ENCODE measurements at regions of chr19 and their contacts with region 1.

Region 1: DNA sequence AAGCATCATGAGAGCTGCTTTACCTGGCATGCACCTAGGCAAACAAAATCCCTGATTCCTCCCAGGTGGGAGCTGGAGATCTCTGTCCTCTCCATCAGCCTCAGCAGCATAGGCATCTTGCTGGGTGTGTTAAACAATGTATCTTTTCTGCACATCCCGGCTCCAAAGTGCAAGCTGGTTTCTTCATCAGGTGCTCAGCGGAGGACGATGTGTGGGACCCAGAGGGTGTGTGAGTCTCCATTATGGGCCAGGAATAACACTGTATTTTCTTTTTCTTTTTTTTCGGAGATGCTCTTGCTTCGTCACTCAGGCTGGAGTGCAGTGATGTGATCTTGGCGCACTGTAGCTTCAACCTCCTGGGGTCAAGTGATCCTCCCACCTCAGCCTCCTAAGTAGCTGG is 9.9 kb downstream of the CNFN start:
- DNase-seq: no peak
- ATAC-seq: no peak
- H3K4me3 Mint-ChIP-seq: no peak overlapping the region
- H3K27ac Mint-ChIP-seq: no peak overlapping the region
- H3K4me1 Mint-ChIP-seq: peaks cover 2% of the 10 kb centered on the region
- H3K27me3 Mint-ChIP-seq: peaks cover 10% of the 10 kb centered on the region

Region 2: DNA sequence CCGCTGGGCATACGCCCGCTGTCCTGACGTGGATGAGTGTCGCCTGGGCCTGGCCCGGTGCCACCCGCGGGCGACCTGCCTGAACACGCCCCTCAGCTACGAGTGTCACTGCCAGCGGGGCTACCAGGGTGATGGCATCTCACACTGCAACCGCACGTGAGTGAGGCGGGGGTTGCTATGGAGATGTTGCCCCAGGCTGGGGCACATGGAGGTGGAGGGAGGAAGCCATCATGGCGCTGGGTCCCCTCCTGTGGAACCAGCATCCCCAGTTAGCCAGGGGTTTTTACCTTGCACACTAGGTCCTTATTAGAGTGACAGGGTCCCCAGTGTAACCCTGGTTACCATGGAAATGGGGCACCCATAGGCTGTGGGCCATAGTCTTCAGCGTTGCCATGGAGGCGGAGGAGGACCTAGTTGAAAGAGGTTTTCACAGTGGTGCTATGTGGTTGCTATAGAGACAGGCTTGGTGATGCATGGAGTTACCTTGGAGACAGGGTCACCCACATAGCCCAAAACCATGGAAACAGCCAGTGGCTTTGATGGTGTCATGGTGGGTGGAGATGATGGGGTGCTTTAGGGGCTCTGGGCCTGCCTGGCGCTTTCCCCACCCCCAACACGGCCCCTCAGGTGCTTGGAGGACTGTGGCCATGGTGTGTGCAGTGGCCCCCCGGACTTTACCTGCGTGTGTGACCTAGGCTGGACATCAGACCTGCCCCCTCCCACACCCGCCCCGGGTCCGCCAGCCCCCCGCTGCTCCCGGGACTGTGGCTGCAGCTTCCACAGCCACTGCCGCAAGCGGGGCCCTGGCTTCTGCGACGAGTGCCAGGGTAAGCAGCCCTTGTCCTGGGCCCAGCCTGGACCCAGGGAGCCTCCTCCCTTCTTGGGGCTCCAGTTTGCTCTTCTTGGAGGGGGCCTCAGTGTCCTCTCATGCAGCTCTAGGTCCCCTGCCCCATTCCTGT is 27.6 kb before region 1 on chr19:
- CTCF ChIA-PET with region 1: no interaction called
- POLR2A ChIA-PET with region 1: no interaction called
- DNase-seq: peak; percentile 39
- ATAC-seq: peak; percentile 67
- H3K4me3 Mint-ChIP-seq: no peak overlapping the region
- H3K27ac Mint-ChIP-seq: no peak overlapping the region
- H3K4me1 Mint-ChIP-seq: no peaks in the 10 kb centered on the region
- H3K27me3 Mint-ChIP-seq: no peaks in the 10 kb centered on the region

Region 3: GRCh38 chr19:42401365-42402303 is 21.5 kb after region 1 on chr19:
- CTCF ChIA-PET with region 1: interaction called, 10 read pairs
- POLR2A ChIA-PET with region 1: interaction called, 7 read pairs
- DNase-seq: peak; percentile 78
- ATAC-seq: peak; percentile 54
- H3K4me3 Mint-ChIP-seq: peak overlapping the region; percentile 69
- H3K27ac Mint-ChIP-seq: peak overlapping the region; percentile 63
- H3K4me1 Mint-ChIP-seq: peaks cover 33% of the 10 kb centered on the region
- H3K27me3 Mint-ChIP-seq: no peaks in the 10 kb centered on the region

Region 4: DNA sequence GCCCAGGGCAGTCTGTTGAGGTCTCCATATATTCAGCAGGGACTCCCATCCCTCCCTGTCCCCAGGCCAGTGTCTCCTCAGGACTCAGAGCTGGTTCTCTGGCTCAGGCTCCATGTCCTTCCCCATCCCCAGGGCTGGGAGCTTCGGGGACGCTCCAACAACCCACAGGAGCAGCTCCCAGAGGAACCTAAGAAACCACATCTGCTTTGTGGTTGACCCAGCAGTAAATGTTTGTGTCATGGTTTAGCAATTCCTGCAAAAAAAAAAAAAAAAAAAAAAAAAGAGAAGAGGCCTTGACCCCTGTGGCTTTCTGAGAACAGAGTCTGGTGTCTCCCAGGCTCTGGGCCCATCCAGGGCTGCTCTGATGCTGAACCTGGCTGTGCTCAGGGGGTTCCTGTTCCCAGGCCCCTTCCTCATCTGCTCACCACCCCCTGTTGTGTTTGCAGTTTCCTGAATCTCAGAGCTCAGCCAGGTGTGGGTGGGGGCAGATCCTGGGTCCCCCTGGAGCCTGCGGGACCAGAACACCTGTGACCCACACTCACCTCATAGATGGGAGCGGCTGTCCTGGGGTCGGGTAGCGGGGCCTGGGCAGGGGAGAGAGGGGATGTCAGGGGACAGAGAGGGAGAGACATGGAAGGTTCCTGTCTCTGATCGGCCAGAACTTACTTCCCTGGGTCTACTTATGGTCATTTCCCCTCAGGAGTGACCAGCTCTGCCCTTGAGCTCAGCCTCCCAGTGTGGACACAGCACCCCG is 173.3 kb after region 1 on chr19:
- CTCF ChIA-PET with region 1: no interaction called
- POLR2A ChIA-PET with region 1: no interaction called
- DNase-seq: no peak
- ATAC-seq: no peak
- H3K4me3 Mint-ChIP-seq: no peak overlapping the region
- H3K27ac Mint-ChIP-seq: no peak overlapping the region
- H3K4me1 Mint-ChIP-seq: peaks cover 15% of the 10 kb centered on the region
- H3K27me3 Mint-ChIP-seq: peaks cover 22% of the 10 kb centered on the region